ENCODE measurements at regions of chr12 and their contacts with region 1.

Region 1: DNA sequence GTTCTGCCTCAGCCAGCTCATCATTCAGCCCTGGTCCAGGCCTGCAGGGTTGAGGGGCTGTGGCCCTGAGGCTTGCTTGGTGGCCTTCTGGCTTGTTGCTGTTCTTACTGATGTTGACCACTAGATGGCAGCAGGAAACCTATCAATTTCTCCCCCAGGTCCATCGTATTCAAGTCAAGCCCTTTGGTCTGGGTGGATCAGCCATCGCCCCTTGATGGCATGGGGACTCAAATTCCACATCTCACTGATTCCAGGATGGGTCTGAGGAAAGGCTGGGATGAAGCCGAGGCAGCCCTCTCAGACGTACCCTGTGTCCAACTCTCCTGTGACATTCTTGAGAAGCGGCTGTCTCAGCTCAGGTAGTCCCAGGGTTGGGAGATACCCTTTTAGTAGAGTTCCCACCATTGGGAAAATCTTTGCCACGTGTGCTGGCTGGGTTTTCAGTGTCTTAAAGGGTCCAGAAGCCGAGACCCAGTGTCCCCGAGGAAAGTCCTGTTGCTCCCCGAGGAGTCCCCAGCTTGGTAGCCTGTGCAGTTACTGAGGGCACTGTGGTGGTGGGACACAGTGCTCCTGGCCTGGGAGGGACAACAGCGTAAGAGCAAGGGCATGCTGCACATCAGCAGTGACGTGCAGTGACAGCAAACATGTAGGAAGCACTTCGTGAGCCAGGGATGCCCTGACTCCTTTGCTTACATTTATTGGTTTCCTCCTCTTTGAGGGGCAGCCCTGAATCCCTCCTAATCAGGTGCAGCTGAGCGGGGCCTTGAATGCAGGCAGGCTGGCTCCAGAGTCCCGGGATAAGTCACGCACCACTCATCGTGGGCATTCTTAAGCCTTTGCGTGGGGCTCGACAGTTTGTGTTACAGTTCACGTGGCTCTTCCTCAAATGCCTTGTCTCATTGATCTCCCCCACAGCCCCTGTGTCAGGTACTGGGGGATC is 58.6 kb downstream of the TSPAN9 start:
- DNase-seq: peak in 2 of 5 donors; percentile 37 to 52
- ATAC-seq: peak; percentile 6 to 44 (median 26)
- H3K4me3 ChIP-seq: no peak overlapping the region
- H3K27ac ChIP-seq: peak overlapping the region in 3 of 12 donors; percentile 28 to 80 (median 36)
- H3K4me1 ChIP-seq: peaks cover 13 to 98% (median 76%) of the 10 kb centered on the region in 12 donors
- H3K27me3 ChIP-seq: no peaks in the 10 kb centered on the region
- CTCF ChIP-seq: peak; percentile 70 to 88 (median 81)
- POLR2A ChIP-seq: no peak

Region 2: DNA sequence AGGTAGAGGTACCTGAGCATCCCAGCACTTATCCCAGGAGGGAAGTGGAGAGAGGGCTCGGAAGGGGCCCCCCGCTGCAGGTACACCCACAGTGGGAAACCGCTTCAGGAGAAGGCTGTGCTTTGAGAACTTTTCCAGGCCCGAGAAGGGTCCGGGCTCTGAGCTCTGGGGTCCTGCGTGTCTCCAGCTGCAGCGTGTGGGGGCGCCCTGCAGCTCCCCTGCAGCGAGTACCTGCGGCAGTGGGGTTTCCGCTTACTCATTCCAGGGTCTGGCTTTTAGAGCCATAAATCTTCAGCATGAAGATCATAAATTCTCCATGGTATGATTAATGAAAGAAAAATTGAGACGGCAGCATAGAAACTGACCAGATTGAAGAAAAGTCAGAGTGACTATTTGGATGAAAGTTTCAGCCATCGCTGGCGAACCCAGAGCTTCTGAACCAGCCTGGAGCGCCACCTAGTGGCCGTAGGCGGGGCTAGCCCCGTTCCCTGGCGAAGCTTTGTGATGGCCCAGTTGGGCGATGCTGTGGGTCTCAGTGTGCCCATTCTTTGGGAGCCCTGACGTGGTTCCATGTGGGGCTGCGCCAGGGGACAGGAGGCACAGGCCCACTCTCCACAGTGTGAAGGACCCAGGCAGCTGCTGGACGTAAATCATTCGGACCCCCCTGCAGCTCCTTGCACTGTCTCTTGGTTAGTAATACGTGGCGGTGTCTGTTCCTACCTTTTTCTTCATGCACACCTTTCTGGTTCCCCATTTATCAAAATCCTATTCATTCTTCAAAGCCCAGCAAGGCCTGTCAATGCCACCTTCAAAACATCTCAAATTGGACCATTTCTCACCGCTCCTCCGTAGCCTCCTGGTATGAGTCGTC is 139.6 kb after region 1 on chr12:
- intact Hi-C with region 1: loop called (anchors 1 to 2 kb)
- DNase-seq: peak; percentile 69 to 88 (median 78)
- ATAC-seq: peak; percentile 42 to 63 (median 51)
- H3K4me3 ChIP-seq: no peak overlapping the region
- H3K27ac ChIP-seq: peak overlapping the region in 10 of 12 donors; percentile 49 to 85 (median 68)
- H3K4me1 ChIP-seq: peaks cover 7 to 100% (median 42%) of the 10 kb centered on the region in 12 donors
- H3K27me3 ChIP-seq: no peaks in the 10 kb centered on the region
- CTCF ChIP-seq: peak; percentile 95 to 100 (median 99)
- POLR2A ChIP-seq: no peak

Region 3: GRCh38 chr12:3803865-3804472 is 668.2 kb after region 1 on chr12:
- intact Hi-C with region 1: loop called in 2 of 10 experiments (anchors 10 kb)
- DNase-seq: peak; percentile 67 to 80 (median 72)
- ATAC-seq: peak in 3 of 4 donors; percentile 82 to 87 (median 84)
- H3K4me3 ChIP-seq: no peak overlapping the region
- H3K27ac ChIP-seq: no peak overlapping the region
- H3K4me1 ChIP-seq: no peaks in the 10 kb centered on the region
- H3K27me3 ChIP-seq: no peaks in the 10 kb centered on the region
- CTCF ChIP-seq: peak; percentile 71 to 90 (median 84)
- POLR2A ChIP-seq: no peak